Activated CD4-positive, alpha-beta T cell treated with anti-CD3 and anti-CD28 coated beads, Interleukin-2, amount 10 ng/mL, durations not matched to agents 24 days and 14 days (primary cell): ENCODE measurements at regions of chr1 and their contacts with region 1.

Region 1: GRCh38 chr1:226062558-226063223 is at the start of gene H3-3A:
- DNase-seq: peak; percentile 99
- H3K4me3 Mint-ChIP-seq: peak within 1 kb of the TSS; percentile 99
- H3K27ac Mint-ChIP-seq: peak within 1 kb of the TSS; percentile 99
- H3K4me1 Mint-ChIP-seq: peaks cover 31% of the 10 kb centered on the region
- H3K27me3 Mint-ChIP-seq: no peaks in the 10 kb centered on the region
- total RNA-seq, gene H3-3A: 390 and 391 TPM in 2 replicates

Region 2: GRCh38 chr1:225428068-225428880 is 634.4 kb before region 1 on chr1:
- intact Hi-C with region 1: loop called (anchors 2 kb)
- DNase-seq: peak; percentile 98
- H3K4me3 Mint-ChIP-seq: peak overlapping the region; percentile 90
- H3K27ac Mint-ChIP-seq: peak overlapping the region; percentile 95
- H3K4me1 Mint-ChIP-seq: peaks cover 50% of the 10 kb centered on the region
- H3K27me3 Mint-ChIP-seq: no peaks in the 10 kb centered on the region

Region 3: GRCh38 chr1:225809842-225810578 is 252.7 kb before region 1 on chr1 and contains the start of gene EPHX1:
- intact Hi-C with region 1: no loop called
- DNase-seq: peak; percentile 94
- H3K4me3 Mint-ChIP-seq: peak within 1 kb of the TSS; percentile 90
- H3K27ac Mint-ChIP-seq: peak within 1 kb of the TSS; percentile 67
- H3K4me1 Mint-ChIP-seq: peaks cover 8% of the 10 kb centered on the region
- H3K27me3 Mint-ChIP-seq: peaks cover 22% of the 10 kb centered on the region
- total RNA-seq, gene EPHX1: 1.6 and 1.8 TPM in 2 replicates

Region 4: GRCh38 chr1:225923692-225924555 is 138.8 kb before region 1 on chr1 and contains the start of gene PYCR2:
- intact Hi-C with region 1: loop called (anchors 2 kb)
- DNase-seq: peak; percentile 99
- H3K4me3 Mint-ChIP-seq: peak within 1 kb of the TSS; percentile 97
- H3K27ac Mint-ChIP-seq: peak within 1 kb of the TSS; percentile 95
- H3K4me1 Mint-ChIP-seq: peaks cover 39% of the 10 kb centered on the region
- H3K27me3 Mint-ChIP-seq: no peaks in the 10 kb centered on the region
- total RNA-seq, gene PYCR2: 144 and 150 TPM in 2 replicates

Region 5: DNA sequence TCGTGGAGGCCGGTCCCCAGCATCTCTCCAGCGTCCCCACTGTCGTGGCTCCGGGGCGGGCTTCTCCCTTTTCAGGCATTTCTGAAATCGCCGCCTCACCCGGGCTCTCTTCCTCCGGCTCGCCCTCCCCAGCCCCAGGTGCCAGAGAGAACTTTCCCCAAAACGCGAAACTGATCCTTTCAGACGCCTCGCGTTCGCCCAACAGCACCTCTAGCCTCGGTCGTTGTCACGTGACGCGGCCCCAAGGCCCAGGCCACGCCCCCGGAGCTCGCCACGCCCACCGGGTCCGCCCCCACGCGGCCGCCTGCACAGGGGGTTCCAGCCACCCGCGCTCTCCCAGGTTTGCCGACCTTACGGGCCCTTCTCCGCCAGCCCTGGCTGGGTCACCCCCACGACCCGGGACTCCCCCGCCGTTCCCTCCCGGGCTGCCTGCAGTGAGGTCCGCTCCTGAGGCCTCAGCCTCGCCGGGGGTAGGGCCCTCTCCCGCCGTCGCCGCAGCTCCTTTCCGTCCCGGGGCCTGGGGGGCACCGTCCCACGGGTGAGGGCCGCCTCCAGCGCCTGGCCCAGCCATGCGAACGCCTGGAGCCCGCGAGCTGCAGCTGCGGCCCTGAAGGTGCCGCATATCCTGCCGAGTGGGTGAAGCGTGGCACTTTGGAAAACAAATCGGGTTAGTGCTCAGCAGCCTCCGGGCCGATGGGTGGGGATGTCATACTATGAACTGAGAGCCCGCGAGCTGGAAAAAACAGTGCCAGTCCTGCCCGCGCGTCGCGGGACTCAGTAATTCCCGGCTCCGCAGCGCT is 20.8 kb after region 1 on chr1:
- intact Hi-C with region 1: loop called (anchors 2 kb)
- DNase-seq: peak; percentile 99
- H3K4me3 Mint-ChIP-seq: peak overlapping the region; percentile 97
- H3K27ac Mint-ChIP-seq: peak overlapping the region; percentile 90
- H3K4me1 Mint-ChIP-seq: peaks cover 8% of the 10 kb centered on the region
- H3K27me3 Mint-ChIP-seq: peaks cover 6% of the 10 kb centered on the region

Region 6: DNA sequence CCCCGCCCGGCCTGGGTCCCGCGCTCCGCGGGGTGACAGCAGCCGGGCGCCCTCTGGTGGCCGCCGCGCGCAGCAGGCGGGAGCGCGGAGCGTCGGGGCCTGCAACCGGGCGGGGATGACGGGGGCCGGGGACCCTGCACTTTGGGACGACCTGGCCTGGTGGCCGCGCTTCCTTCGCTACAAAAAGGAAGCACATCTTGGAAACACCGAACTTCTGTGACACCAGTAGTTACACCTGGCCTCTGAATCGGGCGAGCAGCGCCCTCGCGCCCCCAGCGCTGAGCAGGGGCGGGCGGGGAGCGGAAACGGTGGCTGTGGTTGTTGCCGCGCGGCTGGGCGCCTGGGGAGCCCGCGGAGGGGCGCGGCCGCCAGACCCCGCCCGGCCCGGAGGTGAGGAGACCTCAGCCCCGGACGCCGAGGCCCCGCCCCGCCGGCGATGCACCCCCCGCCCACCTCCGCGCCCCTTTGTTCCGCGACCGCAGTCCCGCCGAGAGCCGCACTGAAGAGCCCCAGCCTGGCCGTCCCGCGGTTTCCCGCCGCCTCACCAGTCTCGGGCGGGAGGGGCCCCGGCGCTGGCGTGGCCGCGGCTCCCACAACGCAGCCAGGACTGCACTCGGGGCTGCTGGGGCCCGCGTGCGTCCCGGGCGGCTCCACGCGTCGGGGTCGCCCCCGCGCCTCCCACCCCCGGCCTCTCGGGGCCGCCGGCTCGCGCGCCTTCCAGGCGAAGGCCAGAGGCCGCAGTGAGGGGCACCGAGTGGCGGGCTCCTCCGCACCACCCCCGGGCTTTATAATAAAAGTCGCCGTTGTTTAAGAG is 59.1 kb after region 1 on chr1:
- intact Hi-C with region 1: loop called (anchors 1 kb)
- DNase-seq: peak; percentile 94
- H3K4me3 Mint-ChIP-seq: peak overlapping the region; percentile 80
- H3K27ac Mint-ChIP-seq: peak overlapping the region; percentile 75
- H3K4me1 Mint-ChIP-seq: peaks cover 22% of the 10 kb centered on the region
- H3K27me3 Mint-ChIP-seq: peaks cover 3% of the 10 kb centered on the region

Region 7: DNA sequence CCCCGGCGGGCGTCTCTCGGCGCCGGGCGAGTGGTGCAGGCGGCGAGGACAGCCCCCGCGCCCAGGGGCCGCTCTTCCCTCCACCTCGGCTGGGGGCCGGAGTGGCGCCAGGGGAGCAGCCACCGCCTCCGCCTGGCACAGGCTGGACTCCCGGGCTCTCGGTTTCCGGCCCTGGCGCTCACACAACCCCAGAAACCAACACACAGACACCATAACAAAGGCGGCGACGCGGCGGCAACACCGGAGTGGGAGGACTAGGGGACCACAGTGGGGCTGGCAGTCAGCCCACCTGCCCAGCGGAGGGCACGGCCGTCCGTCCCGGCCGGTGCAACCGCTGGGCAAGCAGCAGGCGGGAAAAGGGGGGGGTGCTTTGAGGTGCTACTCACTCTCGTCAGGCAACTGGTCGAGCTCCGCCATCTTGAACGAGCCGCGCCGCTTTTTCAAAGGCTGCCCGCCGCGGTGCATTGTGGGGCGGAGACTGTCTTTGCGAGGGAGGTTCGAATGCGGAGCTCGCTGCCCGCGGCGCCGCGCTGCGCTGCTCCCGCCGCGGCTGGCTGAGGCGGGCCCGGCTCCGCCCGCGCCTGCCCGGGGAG is 246.1 kb after region 1 on chr1 and contains the start of gene LIN9:
- intact Hi-C with region 1: loop called (anchors 2 kb)
- DNase-seq: peak; percentile 98
- H3K4me3 Mint-ChIP-seq: peak within 1 kb of the TSS; percentile 91
- H3K27ac Mint-ChIP-seq: peak within 1 kb of the TSS; percentile 89
- H3K4me1 Mint-ChIP-seq: peaks cover 31% of the 10 kb centered on the region
- H3K27me3 Mint-ChIP-seq: peaks cover 20% of the 10 kb centered on the region
- total RNA-seq, gene LIN9: 10.5 and 13.8 TPM in 2 replicates